HEK293 (cell line): ENCODE measurements at regions of chr11 and their contacts with region 1.

Region 1: GRCh38 chr11:20459865-20460264 is 72.3 kb downstream of the PRMT3 start:
- H3K4me3 ChIP-seq: no peak overlapping the region
- H3K27ac ChIP-seq: no peak overlapping the region
- H3K4me1 ChIP-seq: no peaks in the 10 kb centered on the region
- CTCF ChIP-seq: no peak

Region 2: GRCh38 chr11:20443596-20443995 is 16.3 kb before region 1 on chr11:
- CTCF ChIA-PET with region 1: interaction called, 10 read pairs
- POLR2A ChIA-PET with region 1: no interaction called
- H3K4me3 ChIP-seq: no peak overlapping the region
- H3K27ac ChIP-seq: no peak overlapping the region
- H3K4me1 ChIP-seq: no peaks in the 10 kb centered on the region
- CTCF ChIP-seq: no peak

Region 3: GRCh38 chr11:20483931-20484330 is 24.1 kb after region 1 on chr11:
- CTCF ChIA-PET with region 1: no interaction called
- POLR2A ChIA-PET with region 1: no interaction called
- H3K4me3 ChIP-seq: no peak overlapping the region
- H3K27ac ChIP-seq: no peak overlapping the region
- H3K4me1 ChIP-seq: 0 out of 2 replicates have a peak, but pooled peaks cover 3% of the 10 kb centered on the region
- CTCF ChIP-seq: no peak

Region 4: GRCh38 chr11:20617346-20618005 is 157.6 kb after region 1 on chr11:
- CTCF ChIA-PET with region 1: no interaction called
- POLR2A ChIA-PET with region 1: no interaction called
- H3K4me3 ChIP-seq: no peak overlapping the region
- H3K27ac ChIP-seq: no peak overlapping the region
- H3K4me1 ChIP-seq: no peaks in the 10 kb centered on the region
- CTCF ChIP-seq: no peak